ENCODE measurements at regions of chr11 and their contacts with region 1.

Region 1: GRCh38 chr11:111230122-111230465 is 15.4 kb upstream of the POU2AF2 start:
- DNase-seq: no peak
- ATAC-seq: peak; percentile 30
- H3K4me3 ChIP-seq: no peak overlapping the region
- H3K27ac ChIP-seq: no peak overlapping the region
- H3K4me1 ChIP-seq: peaks cover 0 to 22% of the 10 kb centered on the region in 2 donors
- H3K27me3 ChIP-seq: no peaks in the 10 kb centered on the region
- CTCF ChIP-seq: no peak

Region 2: DNA sequence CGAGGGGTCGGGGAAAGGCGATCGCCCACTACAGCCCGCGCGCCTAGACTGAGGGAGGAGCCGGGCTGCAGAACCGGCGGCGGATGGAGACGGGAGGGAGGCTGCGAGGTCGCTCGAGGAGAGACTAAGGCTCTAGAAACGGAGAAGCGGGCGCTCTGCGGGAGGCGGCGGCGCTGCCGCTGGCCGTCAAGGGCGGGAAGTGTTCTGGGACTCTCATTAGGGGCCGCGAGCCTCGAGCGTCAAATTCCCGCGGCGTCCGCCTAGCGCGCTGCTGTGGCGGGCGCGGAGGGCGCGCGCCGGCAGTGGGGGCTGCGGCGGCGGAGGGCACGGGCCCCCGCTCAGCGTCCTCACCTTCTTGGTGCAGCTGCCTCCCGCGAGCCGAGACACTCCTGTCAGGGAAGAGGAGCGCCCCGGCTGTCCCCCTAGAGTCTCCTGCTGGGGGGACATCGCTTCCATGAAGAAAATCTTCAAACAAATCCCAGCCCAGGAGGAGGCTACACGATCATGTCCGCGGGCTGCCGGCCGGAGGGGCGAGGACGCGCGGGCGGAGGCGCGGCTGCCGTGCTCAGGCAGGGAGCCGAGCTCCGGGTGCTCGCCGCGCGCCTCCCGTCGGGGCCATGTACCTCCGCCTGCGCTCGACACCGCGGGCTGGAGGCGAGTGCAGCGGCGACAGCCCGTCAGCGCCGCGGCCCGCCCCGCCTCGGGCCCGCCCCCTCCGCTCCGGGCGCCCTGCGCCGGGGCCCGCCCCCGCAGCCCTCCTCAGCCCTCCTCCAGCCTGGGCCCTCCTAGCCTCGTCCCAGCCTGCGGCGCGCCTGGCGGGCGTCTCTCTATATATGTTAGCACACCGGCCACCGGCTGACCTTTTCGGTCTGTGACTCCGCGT is 518.1 kb before region 1 on chr11 and contains the start of gene ARHGAP20:
- intact Hi-C with region 1: loop called in 1 of 2 experiments (anchors 10 kb)
- DNase-seq: peak; percentile 80 to 91 (median 86)
- ATAC-seq: peak; percentile 94
- H3K4me3 ChIP-seq: peak within 1 kb of the TSS; percentile 47 to 60
- H3K27ac ChIP-seq: peak within 1 kb of the TSS; percentile 76 to 78
- H3K4me1 ChIP-seq: peaks cover 2 to 26% of the 10 kb centered on the region in 2 donors
- H3K27me3 ChIP-seq: peaks cover 0 to 59% of the 10 kb centered on the region in 2 donors
- CTCF ChIP-seq: no peak
- polyA plus RNA-seq, gene ARHGAP20: 33.0 to 47.8 (median 43.6) TPM

Region 3: DNA sequence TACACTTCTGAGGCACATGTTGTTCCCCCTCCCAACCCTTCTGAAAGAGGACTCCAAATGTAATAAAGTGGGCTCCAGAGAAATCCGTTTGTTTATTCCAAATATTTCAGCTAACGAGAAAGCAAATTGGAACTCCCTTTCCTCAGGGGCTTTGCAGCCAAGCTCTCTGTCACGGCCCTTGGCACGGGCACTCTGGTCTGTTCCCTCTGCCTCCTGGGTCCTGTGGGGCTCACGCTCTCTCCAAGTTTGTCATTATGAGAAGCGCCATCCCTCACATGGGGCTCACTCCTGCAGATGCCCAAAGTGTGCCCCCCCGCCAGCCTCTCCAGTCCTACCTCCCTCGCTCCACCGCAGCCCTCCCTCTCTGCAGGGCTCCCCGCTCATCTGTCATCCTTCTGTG is 109.9 kb before region 1 on chr11:
- intact Hi-C with region 1: no loop called
- DNase-seq: peak in 2 of 4 donors; percentile 35 to 66
- ATAC-seq: no peak
- H3K4me3 ChIP-seq: no peak overlapping the region
- H3K27ac ChIP-seq: no peak overlapping the region
- H3K4me1 ChIP-seq: no peaks in the 10 kb centered on the region
- H3K27me3 ChIP-seq: no peaks in the 10 kb centered on the region
- CTCF ChIP-seq: no peak